Activated CD4-positive, alpha-beta memory T cell treated with anti-CD3 and anti-CD28 coated beads, Interleukin-2, amount 10 ng/mL, durations not matched to agents 7 days and 5 days (primary cell): ENCODE measurements at regions of chr19 and their contacts with region 1.

Region 1: DNA sequence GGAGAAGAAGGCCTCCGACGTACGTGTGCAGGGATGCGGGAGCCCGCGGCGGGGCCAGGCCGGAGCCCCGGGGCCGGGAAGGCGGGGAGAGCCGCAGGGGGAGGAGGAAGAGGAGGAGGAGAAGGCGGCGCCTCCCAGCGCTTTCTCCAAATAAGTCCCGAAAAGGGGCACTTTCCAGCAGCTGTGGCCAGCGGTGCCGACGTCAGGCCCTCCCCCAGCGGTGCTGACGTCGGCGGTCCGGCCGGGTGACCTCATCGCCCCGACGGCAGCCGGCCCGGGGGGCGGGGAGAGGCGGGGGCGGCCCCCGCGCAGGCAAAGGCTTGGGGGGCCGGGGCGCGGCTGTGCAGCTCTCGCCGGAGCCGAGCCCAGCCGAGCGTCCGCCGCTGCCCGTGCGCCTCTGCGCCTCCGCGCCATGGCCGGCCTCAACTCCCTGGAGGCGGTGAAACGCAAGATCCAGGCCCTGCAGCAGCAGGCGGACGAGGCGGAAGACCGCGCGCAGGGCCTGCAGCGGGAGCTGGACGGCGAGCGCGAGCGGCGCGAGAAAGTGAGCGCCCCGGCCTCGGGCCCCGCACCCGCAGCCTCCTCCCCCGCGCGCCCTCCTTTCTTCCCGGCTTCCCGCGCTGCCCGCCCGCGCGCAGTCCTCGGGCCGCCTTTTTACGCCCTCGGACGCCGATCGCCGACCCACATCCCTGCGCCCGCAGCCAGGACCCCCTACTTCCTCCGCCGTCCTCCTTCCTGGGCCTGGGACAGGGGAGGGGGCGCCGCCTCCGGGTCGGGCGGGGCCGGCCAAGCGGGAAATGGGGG is at the start of gene TPM4:
- DNase-seq: peak; percentile 94
- H3K4me3 Mint-ChIP-seq: peak within 1 kb of the TSS; percentile 82
- H3K27ac Mint-ChIP-seq: peak within 1 kb of the TSS; percentile 98
- H3K4me1 Mint-ChIP-seq: peaks cover 65% of the 10 kb centered on the region
- H3K27me3 Mint-ChIP-seq: no peaks in the 10 kb centered on the region
- total RNA-seq, gene TPM4: 592 to 611 TPM

Region 2: GRCh38 chr19:16062789-16063188 is 13.6 kb before region 1 on chr19:
- CTCF ChIA-PET with region 1: interaction called, 14 read pairs
- POLR2A ChIA-PET with region 1: interaction called, 30 read pairs
- DNase-seq: peak; percentile 75
- H3K4me3 Mint-ChIP-seq: no peak overlapping the region
- H3K27ac Mint-ChIP-seq: no peak overlapping the region
- H3K4me1 Mint-ChIP-seq: peaks cover 25% of the 10 kb centered on the region
- H3K27me3 Mint-ChIP-seq: peaks cover 4% of the 10 kb centered on the region

Region 3: DNA sequence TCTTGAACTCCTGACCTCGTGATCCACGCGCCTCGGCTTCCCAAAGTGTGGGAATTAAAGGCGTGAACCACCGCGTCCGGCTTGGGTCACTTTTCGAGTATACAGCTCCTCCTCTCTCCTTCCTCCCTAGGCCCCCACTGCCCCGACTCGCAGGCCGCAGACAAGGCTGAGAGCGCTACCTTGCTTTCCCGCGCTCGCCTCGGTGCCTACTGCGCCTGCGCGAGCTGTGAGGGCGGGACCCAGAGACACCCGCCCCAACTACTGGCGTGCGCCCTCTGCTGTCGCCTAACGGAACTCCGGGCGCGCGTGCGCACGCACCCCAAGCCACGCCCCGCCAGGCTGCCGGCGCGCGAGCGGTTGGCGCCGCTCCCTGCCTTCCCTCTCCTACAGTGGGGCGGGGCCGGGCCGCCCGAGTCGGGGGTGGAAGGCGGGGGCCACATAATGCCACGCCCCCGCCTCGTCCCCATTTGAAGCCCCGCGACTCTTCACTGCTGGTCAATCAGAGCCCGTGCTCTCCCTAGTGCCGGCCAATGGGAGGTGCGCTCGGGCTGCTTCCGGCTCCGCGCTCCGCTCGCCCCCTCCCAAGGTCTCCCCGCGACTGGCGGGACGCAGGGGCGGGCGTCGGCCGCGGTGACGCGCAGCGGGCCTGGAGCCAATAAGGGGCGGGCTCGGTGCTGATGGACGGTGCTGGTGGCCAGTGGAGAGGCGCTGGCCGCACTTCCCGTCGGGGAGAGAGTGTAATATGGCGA is 35.0 kb after region 1 on chr19 and contains the start of gene RAB8A:
- CTCF ChIA-PET with region 1: interaction called, 14 read pairs
- POLR2A ChIA-PET with region 1: interaction called, 73 read pairs
- DNase-seq: peak; percentile 98
- H3K4me3 Mint-ChIP-seq: peak within 1 kb of the TSS; percentile 99
- H3K27ac Mint-ChIP-seq: peak within 1 kb of the TSS; percentile 96
- H3K4me1 Mint-ChIP-seq: peaks cover 42% of the 10 kb centered on the region
- H3K27me3 Mint-ChIP-seq: no peaks in the 10 kb centered on the region
- total RNA-seq, gene RAB8A: 141 to 147 TPM

Region 4: DNA sequence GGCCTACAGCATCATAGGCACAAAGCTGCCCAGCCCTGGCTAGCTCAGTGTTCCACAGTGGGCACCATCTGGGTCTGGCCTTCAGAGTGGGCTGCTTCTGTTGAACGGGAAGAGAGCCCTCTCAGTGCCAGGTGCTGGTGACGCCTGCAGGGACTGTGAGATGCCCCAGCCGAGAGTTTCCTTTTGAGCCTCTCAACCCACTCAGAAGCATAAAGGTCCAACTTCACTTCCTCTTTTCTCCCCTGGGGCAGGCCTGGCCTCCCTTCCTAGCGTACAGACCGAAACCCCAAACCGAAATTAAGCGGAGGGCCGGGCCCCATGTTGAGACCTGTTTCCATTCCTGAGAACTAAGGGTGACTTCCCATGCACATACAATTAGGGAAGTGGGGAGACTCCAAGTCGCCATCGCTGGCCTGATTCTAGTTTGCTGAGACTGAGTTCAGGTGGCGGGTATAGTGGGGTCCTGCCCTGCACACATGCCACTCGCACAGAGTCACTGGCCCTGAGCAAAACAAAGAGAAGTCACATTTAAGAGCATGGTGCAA is 42.2 kb after region 1 on chr19:
- CTCF ChIA-PET with region 1: interaction called, 3 read pairs
- POLR2A ChIA-PET with region 1: interaction called, 73 read pairs
- DNase-seq: peak; percentile 57
- H3K4me3 Mint-ChIP-seq: peak overlapping the region; percentile 75
- H3K27ac Mint-ChIP-seq: peak overlapping the region; percentile 99
- H3K4me1 Mint-ChIP-seq: peaks cover 77% of the 10 kb centered on the region
- H3K27me3 Mint-ChIP-seq: no peaks in the 10 kb centered on the region

Region 5: GRCh38 chr19:16371540-16371986 is 295.2 kb after region 1 on chr19:
- CTCF ChIA-PET with region 1: no interaction called
- POLR2A ChIA-PET with region 1: interaction called, 25 read pairs
- DNase-seq: peak; percentile 96
- H3K4me3 Mint-ChIP-seq: no peak overlapping the region
- H3K27ac Mint-ChIP-seq: no peak overlapping the region
- H3K4me1 Mint-ChIP-seq: peaks cover 7% of the 10 kb centered on the region
- H3K27me3 Mint-ChIP-seq: peaks cover 2% of the 10 kb centered on the region